PC-3 (cell line): ENCODE measurements at regions of chr15 and their contacts with region 1.

Region 1: GRCh38 chr15:43105778-43106485 is at the start of gene UBR1:
- DNase-seq: peak; percentile 86
- ATAC-seq: peak; percentile 93
- H3K4me3 ChIP-seq: peak within 1 kb of the TSS; percentile 76
- H3K27ac ChIP-seq: peak within 1 kb of the TSS; percentile 39
- H3K4me1 ChIP-seq: peaks cover 12% of the 10 kb centered on the region
- H3K27me3 ChIP-seq: no peaks in the 10 kb centered on the region
- CTCF ChIP-seq: no peak
- total RNA-seq, gene UBR1: 18.3 and 22.6 TPM in 2 replicates

Region 2: DNA sequence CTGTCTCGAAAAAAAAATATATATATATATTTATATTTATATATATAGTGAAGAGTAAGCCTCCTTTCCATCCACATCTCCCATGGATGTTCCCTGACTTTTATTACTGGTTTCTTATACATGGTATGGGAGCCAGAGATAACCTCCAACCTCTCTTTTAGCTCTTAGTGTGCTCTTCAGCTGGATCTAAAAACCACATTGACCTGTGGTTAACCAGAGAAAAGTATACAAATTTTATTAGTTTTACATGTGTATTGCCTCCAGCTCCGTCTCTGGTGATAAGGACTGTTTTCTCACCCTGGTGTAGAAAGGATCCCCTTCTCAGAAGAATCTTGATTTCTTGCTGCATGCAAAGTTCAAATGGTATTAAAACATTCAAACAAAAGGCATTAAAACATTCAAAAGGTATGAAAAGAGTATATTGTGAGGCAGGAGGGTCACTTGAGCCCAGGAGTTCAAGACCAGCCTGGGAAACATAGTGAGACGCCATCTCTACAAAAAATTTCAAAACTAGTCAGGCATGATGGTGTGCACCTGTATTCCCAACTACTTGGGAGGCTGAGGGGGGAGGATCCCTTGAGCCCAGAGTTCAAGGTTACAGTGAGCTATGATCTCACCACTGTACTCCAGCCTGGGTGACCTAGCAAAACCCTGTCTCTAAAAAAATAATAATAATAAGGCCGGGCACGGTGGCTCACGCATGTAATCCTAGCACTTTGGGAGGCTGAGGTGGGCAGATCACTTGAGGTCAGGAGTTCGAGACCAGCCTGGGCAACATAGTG is 171.9 kb before region 1 on chr15:
- CTCF ChIA-PET with region 1: no interaction called
- POLR2A ChIA-PET with region 1: no interaction called
- intact Hi-C with region 1: no loop called
- DNase-seq: peak; percentile 39
- ATAC-seq: no peak; the same call in 1 of the 2 replicates
- H3K4me3 ChIP-seq: no peak overlapping the region
- H3K27ac ChIP-seq: no peak overlapping the region
- H3K4me1 ChIP-seq: peaks cover 6% of the 10 kb centered on the region
- H3K27me3 ChIP-seq: no peaks in the 10 kb centered on the region
- CTCF ChIP-seq: no peak

Region 3: GRCh38 chr15:43071451-43071850 is 34.5 kb before region 1 on chr15:
- CTCF ChIA-PET with region 1: no interaction called
- POLR2A ChIA-PET with region 1: interaction called, 16 read pairs
- intact Hi-C with region 1: no loop called
- DNase-seq: no peak
- ATAC-seq: no peak
- H3K4me3 ChIP-seq: no peak overlapping the region
- H3K27ac ChIP-seq: no peak overlapping the region
- H3K4me1 ChIP-seq: no peaks in the 10 kb centered on the region
- H3K27me3 ChIP-seq: no peaks in the 10 kb centered on the region
- CTCF ChIP-seq: no peak

Region 4: DNA sequence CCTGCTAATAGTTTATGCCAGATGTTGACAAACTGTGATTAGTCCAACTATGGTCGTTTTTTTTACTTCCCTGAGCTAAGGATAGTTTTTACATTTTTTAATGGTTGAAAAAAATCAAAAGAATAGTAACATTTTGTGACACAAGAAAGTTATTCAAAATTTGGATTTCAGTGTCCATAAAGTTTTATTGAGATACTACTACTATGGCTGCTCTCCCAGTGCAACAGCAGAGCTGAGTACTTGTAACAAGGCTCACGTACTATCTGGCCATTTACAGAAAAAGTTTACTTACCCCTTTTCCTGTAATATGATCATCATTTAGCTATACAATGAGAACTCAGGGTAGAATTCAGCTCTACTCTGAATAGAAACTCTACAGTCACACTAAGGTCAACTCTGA is 15.9 kb after region 1 on chr15:
- CTCF ChIA-PET with region 1: no interaction called
- POLR2A ChIA-PET with region 1: no interaction called
- intact Hi-C with region 1: loop called (anchors 1 kb)
- DNase-seq: no peak
- ATAC-seq: no peak
- H3K4me3 ChIP-seq: no peak overlapping the region
- H3K27ac ChIP-seq: no peak overlapping the region
- H3K4me1 ChIP-seq: no peaks in the 10 kb centered on the region
- H3K27me3 ChIP-seq: no peaks in the 10 kb centered on the region
- CTCF ChIP-seq: no peak

Region 5: GRCh38 chr15:43133430-43134156 is 27.7 kb after region 1 on chr15 and contains the start of gene TMEM62:
- CTCF ChIA-PET with region 1: no interaction called
- POLR2A ChIA-PET with region 1: no interaction called
- intact Hi-C with region 1: loop called (anchors 1 kb)
- DNase-seq: peak; percentile 86
- ATAC-seq: peak; percentile 88
- H3K4me3 ChIP-seq: peak within 1 kb of the TSS; percentile 86
- H3K27ac ChIP-seq: peak within 1 kb of the TSS; percentile 24
- H3K4me1 ChIP-seq: peaks cover 23% of the 10 kb centered on the region
- H3K27me3 ChIP-seq: no peaks in the 10 kb centered on the region
- CTCF ChIP-seq: no peak; the same call in 1 of the 2 replicates
- total RNA-seq, gene TMEM62: 19.6 and 31.6 TPM in 2 replicates